Prostate gland (tissue), 2 donors: ENCODE measurements at regions of chr18 and their contacts with region 1.

Region 1: DNA sequence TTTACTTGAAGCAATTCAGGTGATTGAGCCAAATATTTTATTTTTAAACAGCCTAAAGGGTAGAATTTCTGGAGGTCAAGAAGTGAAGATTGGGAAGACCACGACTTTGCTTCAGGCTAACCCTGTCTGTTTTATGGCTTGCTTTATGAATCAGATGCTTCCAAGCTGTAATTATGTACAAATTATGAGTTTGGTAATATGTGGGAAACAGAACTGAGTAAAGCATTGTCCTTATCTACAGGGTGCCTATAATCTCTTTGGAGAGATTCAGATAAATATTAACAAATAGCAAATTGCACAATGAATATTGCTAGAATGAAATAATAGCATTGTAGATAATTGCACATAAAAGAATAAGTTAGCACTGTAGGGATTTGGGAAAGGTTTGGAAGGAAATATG is 539.4 kb upstream of the CDH2 start:
- DNase-seq: no peak
- H3K4me3 ChIP-seq: no peak overlapping the region
- H3K27ac ChIP-seq: no peak overlapping the region
- H3K4me1 ChIP-seq: no peaks in the 10 kb centered on the region
- H3K27me3 ChIP-seq: no peaks in the 10 kb centered on the region
- CTCF ChIP-seq: no peak
- POLR2A ChIP-seq: no peak

Region 2: DNA sequence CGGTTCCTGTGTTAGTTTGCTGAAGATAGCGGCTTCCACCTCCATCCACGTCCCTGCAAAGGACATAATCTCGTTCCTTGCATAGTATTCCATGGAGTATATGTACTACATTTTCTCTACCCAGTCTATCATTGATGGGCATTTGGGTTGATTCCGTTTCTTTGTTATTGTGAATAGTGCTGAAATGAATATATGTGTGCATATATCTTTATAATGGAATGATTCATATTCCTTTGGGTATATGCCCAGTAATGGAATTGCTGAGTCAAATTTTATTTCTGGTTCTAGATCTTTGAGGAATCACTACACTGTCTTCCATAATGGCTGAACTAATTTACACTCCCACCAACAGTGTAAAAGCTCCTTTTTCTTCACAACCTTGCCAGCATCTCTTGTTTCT is 284.0 kb before region 1 on chr18:
- intact Hi-C with region 1: no loop called
- DNase-seq: no peak
- H3K4me3 ChIP-seq: no peak overlapping the region
- H3K27ac ChIP-seq: no peak overlapping the region
- H3K4me1 ChIP-seq: no peaks in the 10 kb centered on the region
- H3K27me3 ChIP-seq: no peaks in the 10 kb centered on the region
- CTCF ChIP-seq: no peak
- POLR2A ChIP-seq: no peak

Region 3: GRCh38 chr18:28650860-28651259 is 65.5 kb before region 1 on chr18:
- intact Hi-C with region 1: no loop called
- DNase-seq: no peak
- H3K4me3 ChIP-seq: no peak overlapping the region
- H3K27ac ChIP-seq: no peak overlapping the region
- H3K4me1 ChIP-seq: no peaks in the 10 kb centered on the region
- H3K27me3 ChIP-seq: no peaks in the 10 kb centered on the region
- CTCF ChIP-seq: no peak
- POLR2A ChIP-seq: no peak

Region 4: GRCh38 chr18:28794459-28795245 is 78.3 kb after region 1 on chr18:
- intact Hi-C with region 1: loop called (anchors 10 kb)
- DNase-seq: no peak
- H3K4me3 ChIP-seq: no peak overlapping the region
- H3K27ac ChIP-seq: no peak overlapping the region
- H3K4me1 ChIP-seq: no peaks in the 10 kb centered on the region
- H3K27me3 ChIP-seq: no peaks in the 10 kb centered on the region
- CTCF ChIP-seq: no peak
- POLR2A ChIP-seq: no peak